Activated B cell treated with CpG ODN at 0.5 μM for 24 hours (primary cell): ENCODE measurements at regions of chr4 and their contacts with region 1.

Region 1: DNA sequence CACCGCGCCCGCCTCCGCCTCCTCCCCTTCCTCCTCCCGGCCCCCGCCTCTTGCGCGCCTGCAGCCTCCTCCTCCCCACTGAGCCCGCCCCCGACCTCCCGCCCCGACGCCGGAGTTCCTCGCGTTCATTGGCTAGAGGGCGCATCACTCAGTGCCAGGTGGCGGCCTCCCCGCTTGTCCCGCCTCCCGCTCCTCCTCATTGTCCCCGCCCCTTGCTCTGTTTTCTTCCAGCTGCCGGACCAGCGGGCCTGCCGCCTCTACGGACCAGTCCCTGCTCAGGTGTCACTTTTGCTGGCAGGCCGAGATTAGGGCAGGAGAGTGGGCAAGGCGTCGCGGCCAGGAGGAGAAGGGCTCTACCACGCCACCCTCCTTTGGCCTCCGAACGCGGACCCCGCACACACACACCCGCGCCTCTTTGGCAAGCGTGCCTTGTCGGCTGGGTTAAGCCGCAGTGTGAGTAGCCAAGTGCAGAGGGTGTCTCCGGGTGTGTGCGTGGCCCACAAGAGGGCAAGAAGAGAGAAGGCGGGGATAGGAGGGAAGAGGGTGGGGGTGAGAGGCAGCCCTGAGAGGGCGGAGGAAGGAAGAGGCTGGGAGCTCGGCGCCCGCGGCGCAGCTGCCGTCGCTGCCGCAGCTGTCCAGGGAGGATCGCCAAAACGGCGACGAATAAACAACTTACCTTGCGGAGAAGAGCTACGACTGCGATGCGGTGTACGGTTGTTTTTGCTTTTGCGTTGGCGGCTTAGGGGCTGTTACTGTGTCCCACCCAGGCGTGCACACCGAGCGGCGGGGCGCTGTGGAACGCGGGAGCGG is 436 bp upstream of the PPP3CA start:
- DNase-seq: peak; percentile 98
- ATAC-seq: peak; percentile 82
- H3K4me3 Mint-ChIP-seq: peak overlapping the region; percentile 94
- H3K27ac Mint-ChIP-seq: peak overlapping the region; percentile 95
- H3K4me1 Mint-ChIP-seq: peaks cover 39% of the 10 kb centered on the region
- H3K27me3 Mint-ChIP-seq: no peaks in the 10 kb centered on the region
- CTCF ChIP-seq: no peak

Region 2: DNA sequence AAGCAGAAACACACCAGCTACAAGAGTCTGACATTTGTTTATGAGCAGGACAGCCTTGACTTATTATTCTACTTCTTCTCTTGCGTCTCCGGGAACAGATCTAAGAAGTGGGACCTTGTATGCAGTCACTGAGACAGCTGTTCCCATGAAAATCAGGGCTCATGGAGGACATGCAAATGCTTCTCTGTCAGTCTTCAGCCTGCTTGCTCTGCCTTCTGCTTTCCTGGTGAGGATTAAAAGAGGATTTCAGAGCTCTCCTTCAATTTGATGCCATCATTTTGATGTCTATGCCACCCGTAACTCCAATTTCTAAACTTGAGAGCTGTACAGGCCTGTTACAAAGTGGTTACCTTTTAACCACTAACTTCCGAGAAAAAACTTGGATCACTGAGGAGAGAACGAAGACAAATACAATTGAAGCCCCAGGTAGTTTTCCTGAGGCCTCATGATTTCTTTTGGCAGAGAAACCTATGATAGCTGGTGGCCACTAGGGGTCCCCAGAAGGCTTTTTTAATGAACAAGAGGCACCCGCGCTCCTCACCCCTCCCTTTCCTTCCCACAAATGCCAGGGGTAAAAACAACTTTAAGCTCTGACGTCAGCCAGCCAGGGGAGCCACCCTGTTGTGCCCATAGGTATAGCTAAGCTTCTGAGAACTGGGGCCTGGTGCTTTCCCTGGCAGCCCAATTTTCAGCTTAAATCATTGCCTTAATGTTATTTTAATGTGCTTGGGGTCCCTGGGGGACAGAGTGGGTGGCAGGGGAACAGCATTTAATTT is 1254.5 kb before region 1 on chr4:
- CTCF ChIA-PET with region 1: interaction called, 3 read pairs
- POLR2A ChIA-PET with region 1: no interaction called
- intact Hi-C with region 1: loop called (anchors 2 kb)
- DNase-seq: peak; percentile 58
- ATAC-seq: peak; percentile 97
- H3K4me3 Mint-ChIP-seq: no peak overlapping the region
- H3K27ac Mint-ChIP-seq: peak overlapping the region; percentile 78
- H3K4me1 Mint-ChIP-seq: peaks cover 32% of the 10 kb centered on the region
- H3K27me3 Mint-ChIP-seq: no peaks in the 10 kb centered on the region
- CTCF ChIP-seq: no peak

Region 3: GRCh38 chr4:100762738-100763137 is 585.0 kb before region 1 on chr4:
- CTCF ChIA-PET with region 1: no interaction called
- POLR2A ChIA-PET with region 1: no interaction called
- intact Hi-C with region 1: no loop called
- DNase-seq: no peak
- ATAC-seq: no peak
- H3K4me3 Mint-ChIP-seq: no peak overlapping the region
- H3K27ac Mint-ChIP-seq: no peak overlapping the region
- H3K4me1 Mint-ChIP-seq: no peaks in the 10 kb centered on the region
- H3K27me3 Mint-ChIP-seq: peaks cover 8% of the 10 kb centered on the region
- CTCF ChIP-seq: no peak

Region 4: DNA sequence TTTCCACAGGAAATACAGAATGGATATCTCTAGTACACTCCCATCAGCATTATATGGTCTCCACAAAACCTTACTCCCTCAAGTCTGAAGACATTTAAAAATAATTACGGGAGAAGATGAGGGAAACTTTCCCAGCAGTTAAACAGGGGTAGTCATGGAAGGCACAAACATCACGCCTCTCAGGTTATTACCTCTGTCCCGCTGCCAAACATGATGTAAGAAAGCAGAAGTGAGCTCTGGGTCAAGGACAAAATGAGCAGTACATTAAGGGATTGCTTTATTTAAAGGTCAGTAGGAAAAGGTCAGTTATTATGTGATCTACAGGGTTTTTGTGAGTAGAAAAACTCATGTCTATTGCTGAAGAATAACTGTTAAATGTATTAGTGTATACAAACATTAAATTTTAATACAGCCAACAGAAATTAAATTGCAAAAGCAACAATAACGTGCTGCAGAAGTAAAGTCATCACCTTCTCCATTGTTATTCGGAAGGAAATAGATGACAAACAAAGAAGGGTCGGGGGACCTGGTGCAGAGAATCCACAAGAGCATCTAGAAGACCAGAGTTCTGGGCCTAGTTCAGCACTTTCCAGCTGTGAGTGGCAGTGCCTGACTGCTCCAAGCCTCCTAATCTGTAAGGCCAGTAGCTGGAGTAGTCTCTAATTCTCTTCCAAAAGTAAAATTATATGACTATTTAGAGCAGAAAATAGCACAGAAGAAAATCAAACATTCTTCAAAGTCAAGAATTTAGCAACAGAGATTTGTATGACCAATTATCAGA is 171.7 kb before region 1 on chr4:
- CTCF ChIA-PET with region 1: interaction called, 3 read pairs
- POLR2A ChIA-PET with region 1: interaction called, 11 read pairs
- intact Hi-C with region 1: no loop called
- DNase-seq: no peak
- ATAC-seq: peak; percentile 28
- H3K4me3 Mint-ChIP-seq: no peak overlapping the region
- H3K27ac Mint-ChIP-seq: no peak overlapping the region
- H3K4me1 Mint-ChIP-seq: peaks cover 50% of the 10 kb centered on the region
- H3K27me3 Mint-ChIP-seq: no peaks in the 10 kb centered on the region
- CTCF ChIP-seq: no peak

Region 5: GRCh38 chr4:101334963-101335572 is 12.7 kb before region 1 on chr4:
- CTCF ChIA-PET with region 1: no interaction called
- POLR2A ChIA-PET with region 1: interaction called, 14 read pairs
- intact Hi-C with region 1: loop called (anchors 1 kb)
- DNase-seq: no peak
- ATAC-seq: peak; percentile 26
- H3K4me3 Mint-ChIP-seq: no peak overlapping the region
- H3K27ac Mint-ChIP-seq: peak overlapping the region; percentile 25
- H3K4me1 Mint-ChIP-seq: peaks cover 86% of the 10 kb centered on the region
- H3K27me3 Mint-ChIP-seq: no peaks in the 10 kb centered on the region
- CTCF ChIP-seq: no peak

Region 6: DNA sequence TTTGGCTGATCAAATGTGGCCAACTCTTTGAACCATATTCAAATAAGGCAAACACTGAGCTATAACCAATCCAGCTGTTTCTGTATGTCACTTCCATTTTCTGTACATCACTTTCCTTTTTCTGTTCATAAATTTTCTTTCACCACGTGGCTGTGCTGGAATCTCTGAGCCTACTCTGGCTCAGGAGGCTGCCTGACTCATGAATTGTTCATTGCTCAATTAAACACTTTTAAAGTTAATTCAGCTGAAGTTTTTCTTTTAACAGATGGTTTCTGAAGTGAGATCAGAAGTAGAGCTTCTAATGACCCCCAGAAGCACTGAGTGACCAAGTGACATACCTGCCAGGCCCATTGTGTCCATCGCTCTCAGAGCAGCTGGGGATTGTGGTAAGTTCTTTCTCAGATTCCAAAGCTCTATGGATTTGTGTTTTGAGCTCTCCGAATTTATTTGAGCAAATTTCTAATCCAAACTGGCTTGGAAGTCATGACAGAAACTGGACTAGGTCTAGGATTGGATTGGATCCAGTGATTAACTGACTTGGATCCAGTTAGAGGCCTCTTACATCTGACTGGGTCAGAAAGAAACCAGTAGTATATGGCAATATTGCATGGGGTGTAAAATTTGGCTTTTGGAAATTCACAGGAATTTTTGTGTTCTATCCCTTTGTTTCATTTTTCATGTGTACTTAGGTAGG is 321.5 kb after region 1 on chr4:
- CTCF ChIA-PET with region 1: no interaction called
- POLR2A ChIA-PET with region 1: no interaction called
- intact Hi-C with region 1: no loop called
- DNase-seq: no peak
- ATAC-seq: no peak
- H3K4me3 Mint-ChIP-seq: no peak overlapping the region
- H3K27ac Mint-ChIP-seq: no peak overlapping the region
- H3K4me1 Mint-ChIP-seq: peaks cover 7% of the 10 kb centered on the region
- H3K27me3 Mint-ChIP-seq: no peaks in the 10 kb centered on the region
- CTCF ChIP-seq: no peak

Region 7: GRCh38 chr4:101730291-101731117 is 382.7 kb after region 1 on chr4:
- CTCF ChIA-PET with region 1: interaction called, 6 read pairs
- POLR2A ChIA-PET with region 1: interaction called, 8 read pairs
- intact Hi-C with region 1: loop called (anchors 1 kb)
- DNase-seq: no peak
- ATAC-seq: peak; percentile 95
- H3K4me3 Mint-ChIP-seq: no peak overlapping the region
- H3K27ac Mint-ChIP-seq: peak overlapping the region; percentile 53
- H3K4me1 Mint-ChIP-seq: peaks cover 22% of the 10 kb centered on the region
- H3K27me3 Mint-ChIP-seq: no peaks in the 10 kb centered on the region
- CTCF ChIP-seq: peak; percentile 32

Region 8: DNA sequence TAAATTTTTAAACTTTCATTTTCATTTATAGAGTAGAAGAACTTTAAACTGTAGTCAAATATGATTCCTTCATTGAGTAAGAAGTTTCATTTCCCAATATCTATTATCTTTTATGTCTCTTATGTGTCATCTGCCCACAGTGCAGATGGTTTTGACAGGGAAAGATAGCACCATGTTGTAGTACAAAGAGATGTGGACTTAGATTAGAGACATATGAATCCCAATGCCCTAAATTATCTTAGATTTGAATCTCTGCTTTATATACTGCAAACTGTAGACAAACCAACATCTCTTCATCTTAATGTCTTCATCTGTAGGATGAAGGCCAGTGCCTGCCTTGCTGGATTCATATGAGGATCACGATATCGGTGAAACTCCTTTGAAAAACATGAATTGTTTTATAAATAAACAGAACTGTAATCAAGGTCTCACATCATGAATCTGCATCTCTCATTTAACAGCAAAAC is 660.2 kb after region 1 on chr4:
- CTCF ChIA-PET with region 1: no interaction called
- POLR2A ChIA-PET with region 1: no interaction called
- intact Hi-C with region 1: loop called (anchors 10 kb)
- DNase-seq: no peak
- ATAC-seq: peak; percentile 92
- H3K4me3 Mint-ChIP-seq: peak overlapping the region; percentile 38
- H3K27ac Mint-ChIP-seq: peak overlapping the region; percentile 57
- H3K4me1 Mint-ChIP-seq: peaks cover 59% of the 10 kb centered on the region
- H3K27me3 Mint-ChIP-seq: no peaks in the 10 kb centered on the region
- CTCF ChIP-seq: no peak